Right ventricle myocardium superior (tissue), 1 donor: ENCODE measurements at regions of chr3 and their contacts with region 1.

Region 1: GRCh38 chr3:17412950-17413530 is 329.4 kb downstream of the TBC1D5 start:
- DNase-seq: no peak
- ATAC-seq: peak; percentile 76

Region 2: DNA sequence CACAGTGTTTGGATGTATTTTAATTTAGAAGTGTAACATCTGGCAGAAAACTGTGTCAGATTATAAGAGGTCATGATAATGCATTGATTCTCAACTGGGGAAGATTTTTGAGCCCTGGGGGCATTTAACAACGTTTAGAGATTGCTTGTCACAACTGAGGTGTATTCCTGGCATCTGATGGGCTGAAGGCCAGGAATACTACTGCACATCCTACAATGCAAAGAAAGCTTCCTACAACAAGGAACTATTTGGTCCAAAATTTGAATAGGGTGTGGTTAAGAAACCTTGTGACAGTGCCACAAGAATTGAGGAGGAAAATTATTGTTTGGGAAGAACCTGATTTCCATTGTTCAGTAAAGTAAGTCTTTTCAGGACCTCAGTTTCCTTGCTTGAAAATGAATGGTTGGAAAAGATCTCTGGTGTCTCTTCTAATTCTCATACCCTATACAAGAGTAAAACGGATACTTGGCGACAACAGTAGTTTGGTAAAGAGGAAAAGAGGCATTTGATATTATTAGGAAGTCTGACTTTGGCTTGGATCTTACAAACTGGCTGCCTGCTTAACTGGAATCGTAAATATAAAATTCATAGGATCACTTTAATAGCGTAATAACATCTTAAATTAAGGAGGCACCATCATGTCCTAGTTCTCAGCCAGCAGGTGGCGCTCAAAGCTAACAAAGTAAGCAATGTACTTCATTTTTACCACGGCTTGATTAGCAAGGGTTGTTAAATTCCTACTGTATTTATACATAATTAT is 812.1 kb before region 1 on chr3:
- intact Hi-C with region 1: loop called (anchors 10 kb)
- DNase-seq: peak; percentile 87
- ATAC-seq: peak; percentile 91

Region 3: GRCh38 chr3:17258823-17259436 is 154.1 kb before region 1 on chr3:
- intact Hi-C with region 1: loop called (anchors 5 kb)
- DNase-seq: no peak
- ATAC-seq: no peak

Region 4: DNA sequence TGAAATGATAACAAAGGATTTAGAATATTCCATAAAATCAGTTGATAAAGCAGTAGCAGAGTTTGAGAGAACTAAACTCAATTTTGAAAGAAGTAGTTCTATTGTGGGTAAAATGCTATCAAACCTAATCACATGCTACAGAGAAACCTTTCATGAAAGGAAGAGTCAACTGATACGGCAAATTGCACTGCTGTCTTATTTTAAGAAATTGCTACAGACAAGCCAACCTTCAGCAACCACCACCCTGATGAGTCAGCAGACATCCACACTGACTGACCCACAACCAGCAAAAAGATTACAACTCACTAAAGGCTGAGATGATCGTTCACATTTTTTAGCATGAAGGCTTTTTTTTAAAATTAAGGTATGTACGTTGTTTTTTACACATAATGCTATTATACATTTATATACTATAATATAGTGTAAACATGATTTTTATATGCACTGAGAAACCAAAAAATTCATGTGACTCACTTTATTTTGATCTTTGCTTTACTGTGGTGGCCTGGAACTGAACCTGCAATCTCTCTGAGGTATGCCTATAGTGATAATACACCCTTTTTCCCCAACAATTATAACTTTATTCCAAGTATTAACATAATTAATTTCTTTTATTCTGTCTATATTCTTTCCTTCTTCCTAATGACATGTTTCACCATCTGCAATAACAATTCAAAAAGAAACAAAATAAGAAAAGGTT is 219.5 kb after region 1 on chr3:
- intact Hi-C with region 1: no loop called
- DNase-seq: no peak
- ATAC-seq: peak; percentile 78